PC-3 (cell line): ENCODE measurements at regions of chr1 and their contacts with region 1.

Region 1: GRCh38 chr1:172002725-172003345 is 161.5 kb downstream of the DNM3 start:
- DNase-seq: peak; percentile 94
- ATAC-seq: peak; percentile 45
- H3K4me3 ChIP-seq: no peak overlapping the region
- H3K27ac ChIP-seq: no peak overlapping the region
- H3K4me1 ChIP-seq: peaks cover 29% of the 10 kb centered on the region
- H3K27me3 ChIP-seq: no peaks in the 10 kb centered on the region
- CTCF ChIP-seq: peak; percentile 100

Region 2: GRCh38 chr1:171984850-171985485 is 17.9 kb before region 1 on chr1:
- CTCF ChIA-PET with region 1: interaction called, 10 read pairs
- POLR2A ChIA-PET with region 1: no interaction called
- intact Hi-C with region 1: no loop called
- DNase-seq: peak; percentile 78
- ATAC-seq: peak; percentile 54
- H3K4me3 ChIP-seq: no peak overlapping the region
- H3K27ac ChIP-seq: no peak overlapping the region
- H3K4me1 ChIP-seq: no peaks in the 10 kb centered on the region
- H3K27me3 ChIP-seq: peaks cover 32% of the 10 kb centered on the region
- CTCF ChIP-seq: peak; percentile 99

Region 3: GRCh38 chr1:172089768-172090510 is 87.1 kb after region 1 on chr1:
- CTCF ChIA-PET with region 1: interaction called, 5 read pairs
- POLR2A ChIA-PET with region 1: no interaction called
- intact Hi-C with region 1: loop called (anchors 1 kb)
- DNase-seq: peak; percentile 94
- ATAC-seq: peak; percentile 100
- H3K4me3 ChIP-seq: peak overlapping the region; percentile 10; the same call in 1 of the 2 replicates
- H3K27ac ChIP-seq: no peak overlapping the region
- H3K4me1 ChIP-seq: no peaks in the 10 kb centered on the region
- H3K27me3 ChIP-seq: no peaks in the 10 kb centered on the region
- CTCF ChIP-seq: peak; percentile 100

Region 4: GRCh38 chr1:172105223-172105622 is 102.4 kb after region 1 on chr1:
- CTCF ChIA-PET with region 1: no interaction called
- POLR2A ChIA-PET with region 1: no interaction called
- intact Hi-C with region 1: no loop called
- DNase-seq: no peak
- ATAC-seq: peak; percentile 37
- H3K4me3 ChIP-seq: no peak overlapping the region
- H3K27ac ChIP-seq: no peak overlapping the region
- H3K4me1 ChIP-seq: no peaks in the 10 kb centered on the region
- H3K27me3 ChIP-seq: peaks cover 5% of the 10 kb centered on the region; the same call in 1 of the 2 replicates
- CTCF ChIP-seq: no peak

Region 5: DNA sequence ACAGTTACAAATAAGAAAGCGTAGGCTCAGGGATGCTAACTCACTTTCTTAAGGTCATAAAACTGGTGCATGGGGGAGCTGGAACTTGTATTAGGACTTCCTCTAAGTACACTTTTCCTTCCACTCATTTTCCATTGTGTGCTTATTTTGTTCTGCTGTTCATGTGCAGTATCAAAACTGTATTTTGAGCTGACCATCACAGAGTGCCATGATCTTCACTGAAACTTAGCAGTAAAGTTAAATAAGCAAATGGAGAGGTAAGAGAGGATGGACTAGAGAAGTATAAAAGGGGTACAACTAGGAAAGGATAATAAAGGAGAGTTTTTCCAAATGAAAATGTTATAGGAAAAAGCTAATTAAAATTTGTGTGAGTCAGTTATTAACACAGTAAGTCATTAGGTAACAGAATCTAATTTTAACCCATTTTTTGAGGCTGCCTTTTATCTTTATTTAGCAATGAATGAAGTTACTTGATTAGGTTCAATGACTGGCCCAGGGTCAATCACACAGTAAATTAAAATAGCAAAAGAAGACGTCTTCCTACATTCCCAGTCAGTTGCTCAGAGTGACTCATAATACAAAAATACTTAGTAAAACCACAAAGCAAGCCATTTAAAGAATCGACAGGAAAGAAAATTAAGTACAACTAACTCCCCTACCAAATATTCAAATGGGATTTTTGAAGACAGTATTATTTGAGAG is 251.8 kb after region 1 on chr1:
- CTCF ChIA-PET with region 1: interaction called, 4 read pairs
- POLR2A ChIA-PET with region 1: no interaction called
- intact Hi-C with region 1: loop called (anchors 5 kb)
- DNase-seq: peak; percentile 98
- ATAC-seq: peak; percentile 96
- H3K4me3 ChIP-seq: peak overlapping the region; percentile 0; the same call in 1 of the 2 replicates
- H3K27ac ChIP-seq: peak overlapping the region; percentile 53
- H3K4me1 ChIP-seq: peaks cover 23% of the 10 kb centered on the region
- H3K27me3 ChIP-seq: no peaks in the 10 kb centered on the region
- CTCF ChIP-seq: no peak

Region 6: DNA sequence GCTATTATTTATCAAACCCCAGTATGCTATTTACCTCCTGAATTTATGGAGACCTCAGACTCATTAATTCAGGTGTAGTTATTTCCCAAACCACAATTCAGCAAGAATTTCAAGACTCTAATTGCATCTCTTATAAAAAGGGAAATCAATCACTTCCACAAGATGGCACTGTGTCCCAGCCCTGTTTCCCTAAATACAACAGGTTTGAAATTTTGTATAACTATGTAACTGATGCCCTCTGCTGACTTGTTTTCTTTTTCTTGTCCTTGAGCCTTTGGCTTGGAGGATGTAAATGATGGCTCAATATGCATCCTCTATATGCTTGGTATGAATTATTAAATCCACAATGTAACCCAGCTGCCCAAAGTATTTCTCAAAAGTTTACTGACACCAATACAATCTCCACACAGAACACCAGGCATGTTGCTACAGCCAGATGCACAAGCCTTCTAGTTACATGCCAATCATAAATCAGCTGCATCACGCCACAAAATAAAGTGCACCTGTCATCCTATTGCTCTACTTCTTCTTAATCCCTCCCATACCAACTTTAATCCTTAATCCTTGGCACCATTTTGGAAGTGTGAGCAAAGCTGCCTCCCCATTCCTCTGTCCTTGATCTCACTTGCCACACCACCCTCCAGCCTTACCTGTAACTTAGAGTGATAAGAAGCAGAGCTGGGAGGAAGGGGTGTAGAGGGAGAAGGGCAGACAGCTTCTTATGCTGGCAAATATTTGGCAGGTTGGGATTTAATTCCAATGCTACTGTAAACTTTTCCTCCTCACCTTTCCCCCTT is 426.7 kb after region 1 on chr1:
- CTCF ChIA-PET with region 1: interaction called, 13 read pairs
- POLR2A ChIA-PET with region 1: no interaction called
- intact Hi-C with region 1: loop called (anchors 1 kb)
- DNase-seq: peak; percentile 99
- ATAC-seq: peak; percentile 76
- H3K4me3 ChIP-seq: no peak overlapping the region
- H3K27ac ChIP-seq: no peak overlapping the region
- H3K4me1 ChIP-seq: peaks cover 20% of the 10 kb centered on the region
- H3K27me3 ChIP-seq: no peaks in the 10 kb centered on the region
- CTCF ChIP-seq: peak; percentile 100

Region 7: GRCh38 chr1:172713466-172713865 is 710.6 kb after region 1 on chr1:
- CTCF ChIA-PET with region 1: interaction called, 3 read pairs
- POLR2A ChIA-PET with region 1: no interaction called
- intact Hi-C with region 1: loop called (anchors 5 kb)
- DNase-seq: no peak
- ATAC-seq: no peak
- H3K4me3 ChIP-seq: no peak overlapping the region
- H3K27ac ChIP-seq: no peak overlapping the region
- H3K4me1 ChIP-seq: peaks cover 7% of the 10 kb centered on the region
- H3K27me3 ChIP-seq: no peaks in the 10 kb centered on the region
- CTCF ChIP-seq: no peak